ENCODE measurements at regions of chr2 and their contacts with region 1.

Region 1: GRCh38 chr2:161233858-161234431 is 73.7 kb downstream of the TANK start:
- DNase-seq: no peak
- ATAC-seq: no peak
- H3K4me3 ChIP-seq: no peak overlapping the region
- H3K27ac ChIP-seq: no peak overlapping the region
- H3K4me1 ChIP-seq: peaks cover 2% of the 10 kb centered on the region
- H3K27me3 ChIP-seq: no peaks in the 10 kb centered on the region

Region 2: DNA sequence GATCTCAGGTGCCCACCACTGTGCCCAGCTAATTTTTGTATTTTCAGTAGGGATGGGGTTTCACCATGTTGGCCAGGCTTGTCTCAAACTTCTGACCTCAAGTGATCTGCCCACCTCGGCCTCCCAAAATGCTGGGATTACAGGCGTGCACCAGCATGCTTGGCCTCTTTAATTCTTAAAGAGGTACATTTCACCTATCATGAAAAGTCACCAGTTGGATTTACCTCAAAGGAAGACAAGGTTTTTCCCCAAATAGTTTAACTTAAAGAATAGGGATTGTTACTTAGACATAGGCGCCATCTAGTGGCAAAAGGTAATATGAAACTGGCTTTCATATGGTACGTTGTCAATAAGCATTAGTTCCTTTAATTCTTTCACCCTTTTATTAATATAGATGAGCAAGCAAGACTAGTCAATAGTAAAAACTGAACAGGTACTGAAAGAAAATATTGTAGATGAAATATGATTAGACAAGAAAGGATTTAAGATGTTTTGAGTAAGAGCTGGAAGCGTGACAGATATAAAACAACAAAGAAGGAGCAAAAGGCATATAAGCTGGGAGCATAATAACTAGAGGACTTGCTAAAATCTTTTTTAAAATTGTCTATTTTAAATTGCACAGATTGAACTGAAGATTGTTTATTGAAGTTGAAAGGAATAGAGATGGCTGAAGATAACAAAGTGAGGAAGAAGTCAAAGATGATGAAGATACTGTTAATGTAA is 39.3 kb after region 1 on chr2:
- intact Hi-C with region 1: loop called in 1 of 4 experiments (anchors 5 kb)
- DNase-seq: no peak
- ATAC-seq: no peak
- H3K4me3 ChIP-seq: no peak overlapping the region
- H3K27ac ChIP-seq: no peak overlapping the region
- H3K4me1 ChIP-seq: no peaks in the 10 kb centered on the region
- H3K27me3 ChIP-seq: no peaks in the 10 kb centered on the region